ENCODE measurements at regions of chr2 and their contacts with region 1.

Region 1: DNA sequence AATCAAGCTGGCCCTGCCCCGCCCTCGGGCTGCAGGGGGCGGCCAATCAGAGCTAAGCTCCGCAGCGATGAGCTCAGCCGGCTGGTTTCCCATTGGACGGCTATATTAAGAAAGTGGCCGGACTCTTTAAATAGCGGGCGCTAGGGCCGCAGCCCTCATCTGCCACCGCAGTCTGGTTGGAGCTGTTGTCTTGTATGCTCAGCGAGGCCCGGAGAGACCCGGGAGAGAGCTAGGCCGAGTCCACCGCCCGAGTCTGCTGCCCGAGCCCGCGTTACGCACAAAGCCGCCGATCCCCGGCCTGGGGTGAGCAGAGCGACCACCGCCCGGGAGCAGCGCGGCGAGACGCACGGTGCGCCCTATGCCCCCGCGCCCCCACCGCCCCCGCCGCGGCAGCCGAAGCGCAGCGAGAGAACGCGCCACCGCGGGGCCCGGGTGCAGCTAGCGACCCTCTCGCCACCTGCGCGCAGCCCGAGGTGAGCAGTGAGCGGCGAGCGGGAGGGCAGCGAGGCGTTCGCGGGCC is at the start of gene RHOB:
- DNase-seq: peak; percentile 89
- H3K4me3 Mint-ChIP-seq: peak within 1 kb of the TSS; percentile 81
- H3K27ac Mint-ChIP-seq: peak within 1 kb of the TSS; percentile 61
- H3K4me1 Mint-ChIP-seq: peaks cover 12% of the 10 kb centered on the region
- H3K27me3 Mint-ChIP-seq: peaks cover 64% of the 10 kb centered on the region
- total RNA-seq, gene RHOB: 27.6 and 29.6 TPM in 2 replicates

Region 2: GRCh38 chr2:19901442-19902215 is 545.3 kb before region 1 on chr2 and contains the start of gene TTC32:
- intact Hi-C with region 1: loop called (anchors 5 kb)
- DNase-seq: peak; percentile 89
- H3K4me3 Mint-ChIP-seq: peak within 1 kb of the TSS; percentile 91
- H3K27ac Mint-ChIP-seq: peak within 1 kb of the TSS; percentile 94
- H3K4me1 Mint-ChIP-seq: peaks cover 48% of the 10 kb centered on the region
- H3K27me3 Mint-ChIP-seq: peaks cover 9% of the 10 kb centered on the region
- total RNA-seq, gene TTC32: 14.0 and 15.7 TPM in 2 replicates

Region 3: DNA sequence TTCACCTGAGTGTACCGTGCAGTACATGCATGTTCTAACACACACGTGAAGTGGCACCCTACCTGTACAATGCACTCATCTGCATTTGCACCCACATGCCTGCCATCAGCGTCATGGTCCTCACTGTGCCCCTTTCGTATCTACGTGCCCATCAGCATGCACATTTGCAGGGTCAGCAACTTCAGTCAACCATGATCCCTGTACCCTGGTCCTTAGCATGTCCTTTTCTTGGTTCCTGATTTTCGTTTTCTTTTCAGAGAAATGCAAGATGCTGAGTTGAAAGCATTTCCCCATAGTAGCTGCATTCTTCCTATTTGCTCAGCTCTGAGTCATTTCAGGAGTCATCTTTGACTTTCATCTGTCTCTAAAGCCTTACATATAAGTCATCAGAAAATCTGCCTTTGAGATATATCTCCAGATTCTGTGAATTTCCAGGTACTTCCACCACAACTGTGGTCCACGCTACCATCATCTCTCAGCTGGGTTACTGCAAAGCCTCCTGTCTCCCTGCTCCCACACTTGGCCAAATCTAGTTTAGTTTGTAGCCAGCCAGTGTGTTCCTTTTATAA is 81.6 kb before region 1 on chr2:
- intact Hi-C with region 1: loop called (anchors 5 kb)
- DNase-seq: peak; percentile 67
- H3K4me3 Mint-ChIP-seq: peak overlapping the region; percentile 2
- H3K27ac Mint-ChIP-seq: peak overlapping the region; percentile 77
- H3K4me1 Mint-ChIP-seq: peaks cover 37% of the 10 kb centered on the region
- H3K27me3 Mint-ChIP-seq: no peaks in the 10 kb centered on the region

Region 4: GRCh38 chr2:20430461-20431300 is 16.3 kb before region 1 on chr2:
- intact Hi-C with region 1: loop called (anchors 2 kb)
- DNase-seq: no peak
- H3K4me3 Mint-ChIP-seq: peak overlapping the region; percentile 1
- H3K27ac Mint-ChIP-seq: peak overlapping the region; percentile 45
- H3K4me1 Mint-ChIP-seq: peaks cover 38% of the 10 kb centered on the region
- H3K27me3 Mint-ChIP-seq: no peaks in the 10 kb centered on the region

Region 5: GRCh38 chr2:20490260-20491181 is 43.5 kb after region 1 on chr2:
- intact Hi-C with region 1: no loop called
- DNase-seq: no peak
- H3K4me3 Mint-ChIP-seq: no peak overlapping the region
- H3K27ac Mint-ChIP-seq: no peak overlapping the region
- H3K4me1 Mint-ChIP-seq: no peaks in the 10 kb centered on the region
- H3K27me3 Mint-ChIP-seq: peaks cover 11% of the 10 kb centered on the region

Region 6: GRCh38 chr2:20642055-20642971 is 195.3 kb after region 1 on chr2:
- intact Hi-C with region 1: loop called (anchors 1 kb)
- DNase-seq: peak; percentile 62
- H3K4me3 Mint-ChIP-seq: no peak overlapping the region
- H3K27ac Mint-ChIP-seq: no peak overlapping the region
- H3K4me1 Mint-ChIP-seq: no peaks in the 10 kb centered on the region
- H3K27me3 Mint-ChIP-seq: no peaks in the 10 kb centered on the region

Region 7: DNA sequence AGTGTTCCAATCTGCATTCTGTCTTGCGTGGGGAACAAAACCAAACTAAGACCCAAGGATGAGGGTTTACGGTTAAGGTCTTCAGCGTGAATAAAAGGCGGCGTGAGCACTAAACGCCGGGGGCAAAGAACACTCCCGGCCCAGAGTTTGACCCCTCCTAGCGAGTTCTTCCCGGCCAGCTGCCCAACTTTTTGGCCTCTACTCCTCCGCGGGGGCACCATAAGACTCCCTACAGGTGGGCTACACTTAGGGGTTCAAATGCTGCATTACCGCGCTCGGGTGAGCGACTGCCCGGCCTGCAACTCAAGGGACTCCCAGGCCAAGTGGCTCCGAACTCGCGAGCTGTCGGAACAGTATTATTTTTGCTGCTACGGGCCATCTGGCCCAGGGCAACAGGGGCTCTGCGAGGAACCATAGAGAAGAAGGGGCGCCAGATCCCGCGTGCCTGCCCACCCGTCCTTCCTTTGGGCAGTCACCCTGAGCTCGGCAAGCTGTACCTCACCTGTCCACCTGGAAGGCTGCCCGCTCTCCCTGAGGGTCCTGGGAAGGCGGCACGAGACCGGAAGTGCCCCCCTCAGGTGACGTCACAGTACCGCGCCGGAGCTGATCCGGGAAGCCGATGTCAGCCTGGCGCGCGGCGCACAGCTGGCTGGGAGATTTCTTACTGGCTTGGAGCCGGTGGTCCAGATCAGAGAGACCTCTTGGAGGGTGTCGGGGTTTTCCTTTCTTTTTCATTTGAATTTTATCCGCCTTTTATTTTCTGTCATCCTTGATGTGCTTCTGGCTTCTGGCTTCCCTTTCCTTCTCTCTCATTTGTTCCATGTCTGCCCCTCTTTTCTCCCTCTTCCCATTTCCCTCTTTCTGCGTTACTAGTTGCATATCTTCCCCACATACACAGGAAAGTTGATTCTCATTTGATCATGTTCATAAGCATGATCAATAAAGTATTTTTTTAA is 375.8 kb after region 1 on chr2 and contains the start of gene LDAH:
- intact Hi-C with region 1: loop called (anchors 10 kb)
- DNase-seq: peak; percentile 74
- H3K4me3 Mint-ChIP-seq: peak within 1 kb of the TSS; percentile 98
- H3K27ac Mint-ChIP-seq: peak within 1 kb of the TSS; percentile 98
- H3K4me1 Mint-ChIP-seq: peaks cover 28% of the 10 kb centered on the region
- H3K27me3 Mint-ChIP-seq: no peaks in the 10 kb centered on the region
- total RNA-seq, gene LDAH: 34.6 and 34.7 TPM in 2 replicates

Region 8: DNA sequence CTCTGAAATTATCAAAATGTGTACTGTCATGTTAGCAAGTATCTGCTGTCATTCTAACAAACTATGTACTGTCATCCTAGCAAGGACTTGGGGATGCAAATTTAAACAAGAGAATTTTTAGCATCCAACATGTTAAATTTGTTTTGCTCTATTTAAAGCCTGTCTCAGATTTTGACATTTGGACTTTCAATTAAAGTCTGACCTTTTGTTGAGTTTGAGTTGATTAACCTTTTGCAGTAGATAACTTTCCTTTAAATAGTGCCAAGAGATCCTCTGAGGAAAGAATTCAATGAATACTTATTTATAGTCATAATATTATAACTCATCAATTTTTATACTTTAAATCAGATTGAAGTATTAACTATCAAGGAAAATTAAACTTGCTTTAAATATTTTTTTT is 757.0 kb after region 1 on chr2:
- intact Hi-C with region 1: no loop called
- DNase-seq: no peak
- H3K4me3 Mint-ChIP-seq: no peak overlapping the region
- H3K27ac Mint-ChIP-seq: no peak overlapping the region
- H3K4me1 Mint-ChIP-seq: no peaks in the 10 kb centered on the region
- H3K27me3 Mint-ChIP-seq: no peaks in the 10 kb centered on the region

Measured in activated T-helper 1 cell treated with anti-CD3 and anti-CD28 coated beads, Interleukin-12 subunit alpha, Interleukin-12 subunit beta, Interleukin-2, Interleukin-4 antibody, amounts not matched to agents 30 ng/mL and 10 ng/mL and 1 ng/mL, durations not matched to agents 14 hours and 24 hours and 36 hours (primary cell).